AG04449 (cell line): ENCODE measurements at regions of chr17 and their contacts with region 1.

Region 1: GRCh38 chr17:76623271-76624146 is 20.0 kb downstream of the ST6GALNAC1 start:
- DNase-seq: no peak
- H3K4me3 ChIP-seq: no peak overlapping the region
- CTCF ChIP-seq: peak; percentile 88

Region 2: DNA sequence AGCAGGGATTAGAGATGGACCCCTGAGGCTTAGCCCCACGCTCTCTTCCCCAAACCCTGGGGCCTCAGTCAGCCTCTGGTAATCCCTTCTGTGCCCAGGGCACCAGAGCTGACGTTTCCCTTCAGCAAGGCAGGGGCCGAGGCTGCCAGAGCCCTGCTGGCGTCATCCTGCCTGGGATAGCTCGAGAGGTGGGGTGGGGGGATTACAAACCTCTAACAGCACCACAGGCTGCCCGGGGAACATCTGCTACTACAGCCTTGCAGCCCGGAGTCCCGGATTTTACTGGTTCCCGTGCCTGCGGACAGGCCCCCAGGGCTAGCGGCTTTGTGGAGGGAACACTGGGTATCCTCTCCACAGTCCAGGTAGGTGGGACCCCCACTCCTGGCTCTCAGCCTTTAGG is 156.1 kb before region 1 on chr17 and contains the start of gene AANAT:
- CTCF ChIA-PET with region 1: interaction called, 10 read pairs
- POLR2A ChIA-PET with region 1: no interaction called
- DNase-seq: no peak
- H3K4me3 ChIP-seq: no peak within 1 kb of the TSS
- CTCF ChIP-seq: no peak

Region 3: GRCh38 chr17:76515274-76515949 is 108.1 kb before region 1 on chr17:
- CTCF ChIA-PET with region 1: interaction called, 156 read pairs
- POLR2A ChIA-PET with region 1: no interaction called
- DNase-seq: peak; percentile 64
- H3K4me3 ChIP-seq: peak overlapping the region; percentile 12
- CTCF ChIP-seq: no peak

Region 4: GRCh38 chr17:76547184-76547641 is 76.3 kb before region 1 on chr17:
- CTCF ChIA-PET with region 1: interaction called, 20 read pairs
- POLR2A ChIA-PET with region 1: no interaction called
- DNase-seq: no peak
- H3K4me3 ChIP-seq: no peak overlapping the region
- CTCF ChIP-seq: peak; percentile 68

Region 5: GRCh38 chr17:76567634-76568432 is 55.7 kb before region 1 on chr17:
- CTCF ChIA-PET with region 1: interaction called, 123 read pairs
- POLR2A ChIA-PET with region 1: interaction called, 3 read pairs
- DNase-seq: no peak
- H3K4me3 ChIP-seq: no peak overlapping the region
- CTCF ChIP-seq: no peak

Region 6: GRCh38 chr17:76597728-76598474 is 25.6 kb before region 1 on chr17:
- CTCF ChIA-PET with region 1: interaction called, 23 read pairs
- POLR2A ChIA-PET with region 1: no interaction called
- DNase-seq: no peak
- H3K4me3 ChIP-seq: no peak overlapping the region
- CTCF ChIP-seq: no peak

Region 7: DNA sequence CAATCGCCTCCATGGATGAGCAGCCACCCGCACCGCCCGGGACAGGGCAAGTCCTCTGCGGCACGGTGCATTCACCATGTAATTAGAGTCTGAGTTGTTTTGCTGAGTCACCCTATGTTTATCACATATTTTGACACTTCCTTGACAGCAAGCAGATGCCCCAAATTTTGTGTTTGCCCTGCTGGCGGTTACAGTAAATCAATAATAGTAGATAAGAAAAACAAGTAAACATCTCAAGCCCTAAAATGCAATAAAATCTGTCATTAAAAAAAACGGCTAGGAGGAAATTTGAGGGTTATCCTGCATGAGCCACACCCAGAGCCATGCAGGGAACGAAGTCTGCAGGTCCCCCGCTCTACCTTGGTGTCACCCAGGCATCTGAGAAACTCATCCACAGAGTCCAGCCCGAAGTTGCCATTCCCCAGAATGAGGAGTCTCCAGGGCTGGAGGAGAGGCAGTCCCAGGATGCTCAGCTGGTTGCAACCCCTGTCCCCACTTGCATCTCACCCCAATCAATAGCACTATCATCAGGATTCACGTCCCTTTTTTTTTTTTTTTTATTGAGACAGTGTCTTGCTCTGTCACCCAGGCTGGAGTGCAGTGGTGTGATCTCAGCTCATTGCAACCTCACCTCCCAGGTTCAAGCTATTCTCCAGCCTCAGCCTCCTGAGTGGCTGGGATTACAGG is 36.6 kb after region 1 on chr17:
- CTCF ChIA-PET with region 1: interaction called, 19 read pairs
- POLR2A ChIA-PET with region 1: no interaction called
- DNase-seq: no peak
- H3K4me3 ChIP-seq: no peak overlapping the region
- CTCF ChIP-seq: no peak